GM13976 (cell line): ENCODE measurements at regions of chr16 and their contacts with region 1.

Region 1: GRCh38 chr16:57045694-57046381 is 46.5 kb upstream of the CPNE2 start:
- DNase-seq: peak; percentile 83
- CTCF ChIP-seq: peak; percentile 81

Region 2: GRCh38 chr16:56964243-56965148 is 81.3 kb before region 1 on chr16:
- in situ Hi-C with region 1: loop called (anchors 10 kb)
- DNase-seq: peak; percentile 90
- CTCF ChIP-seq: peak; percentile 96

Region 3: GRCh38 chr16:57204675-57205074 is 158.8 kb after region 1 on chr16:
- in situ Hi-C with region 1: no loop called
- DNase-seq: no peak
- CTCF ChIP-seq: no peak